ENCODE measurements at regions of chr21 and their contacts with region 1.

Region 1: DNA sequence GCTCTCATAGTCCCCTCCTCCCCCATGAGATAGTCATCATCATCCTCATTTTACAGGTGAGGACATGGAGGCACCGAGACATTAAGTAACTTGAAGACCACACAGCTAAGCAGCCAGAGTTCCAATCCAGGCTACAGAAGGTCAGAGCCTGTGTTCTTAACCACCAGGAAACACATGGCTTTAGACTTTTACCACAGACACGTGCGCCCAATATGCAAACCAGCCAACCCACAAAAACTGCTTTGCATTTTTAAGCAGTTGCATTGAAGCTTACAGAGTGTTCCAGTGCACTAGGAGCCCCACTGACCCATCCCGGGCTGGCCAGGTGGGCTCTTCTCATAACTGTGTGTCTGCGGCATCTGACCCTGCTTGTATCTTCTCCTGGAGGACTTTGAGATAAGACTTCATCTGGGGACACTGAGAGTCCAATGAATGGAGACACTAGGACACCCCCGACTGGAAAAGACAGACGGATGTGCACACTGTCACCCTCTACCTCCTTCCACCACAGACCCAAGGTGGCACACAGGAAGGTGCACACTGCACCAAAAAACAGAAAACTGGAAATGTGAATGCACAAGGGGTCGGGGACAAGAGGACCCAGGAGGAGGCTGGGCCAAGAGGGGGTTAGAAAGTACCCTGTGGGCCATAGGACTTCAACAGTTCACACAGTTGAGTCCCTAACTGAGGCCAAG is 56.4 kb downstream of the ETS2 start:
- DNase-seq: peak; percentile 77
- ATAC-seq: peak; percentile 84
- H3K4me3 ChIP-seq: peak overlapping the region in 2 of 5 experiments; percentile 26 to 29
- H3K4me3 Mint-ChIP-seq: peak overlapping the region; percentile 76
- H3K27ac ChIP-seq: no peak overlapping the region
- H3K27ac Mint-ChIP-seq: peak overlapping the region; percentile 66
- H3K4me1 ChIP-seq: peaks cover 26 to 36% of the 10 kb centered on the region in 2 donors
- H3K4me1 Mint-ChIP-seq: peaks cover 26% of the 10 kb centered on the region
- H3K27me3 ChIP-seq: peaks cover 0 to 47% (median 15%) of the 10 kb centered on the region in 4 experiments
- H3K27me3 Mint-ChIP-seq: peaks cover 70% of the 10 kb centered on the region
- CTCF ChIP-seq: no peak

Region 2: GRCh38 chr21:38831526-38832467 is 30.3 kb before region 1 on chr21:
- CTCF ChIA-PET with region 1: no interaction called
- POLR2A ChIA-PET with region 1: no interaction called
- intact Hi-C with region 1: loop called (anchors 1 kb)
- DNase-seq: peak; percentile 71
- ATAC-seq: peak; percentile 82
- H3K4me3 ChIP-seq: peak overlapping the region in 1 of 5 experiments; percentile 49
- H3K4me3 Mint-ChIP-seq: peak overlapping the region; percentile 47
- H3K27ac ChIP-seq: peak overlapping the region in 1 of 2 donors; percentile 28
- H3K27ac Mint-ChIP-seq: peak overlapping the region; percentile 51
- H3K4me1 ChIP-seq: peaks cover 15 to 19% of the 10 kb centered on the region in 2 donors
- H3K4me1 Mint-ChIP-seq: peaks cover 18% of the 10 kb centered on the region
- H3K27me3 ChIP-seq: peaks cover 0 to 8% (median 1%) of the 10 kb centered on the region in 4 experiments
- H3K27me3 Mint-ChIP-seq: peaks cover 22% of the 10 kb centered on the region
- CTCF ChIP-seq: no peak

Region 3: DNA sequence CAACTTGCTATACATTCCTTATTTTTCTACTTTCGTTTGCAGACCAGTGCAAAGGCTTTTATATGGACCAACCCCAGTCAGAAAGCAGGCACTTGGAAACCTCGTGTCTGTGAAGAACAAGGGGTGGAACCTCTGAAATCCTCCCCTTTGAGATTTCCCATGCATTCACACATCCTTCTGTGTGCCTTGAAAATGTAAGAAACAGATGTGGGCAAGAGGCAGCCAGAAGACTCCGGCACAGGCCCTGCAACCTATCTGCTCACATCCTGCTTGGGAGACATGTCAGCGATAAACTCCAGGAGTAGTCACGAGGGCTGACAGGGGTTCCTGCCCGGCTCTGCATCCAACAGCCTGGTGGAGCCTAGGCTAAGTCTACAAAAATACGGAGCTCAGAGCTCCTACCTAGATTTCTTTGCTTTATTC is 13.9 kb before region 1 on chr21:
- CTCF ChIA-PET with region 1: no interaction called
- POLR2A ChIA-PET with region 1: no interaction called
- intact Hi-C with region 1: no loop called
- DNase-seq: no peak
- ATAC-seq: no peak
- H3K4me3 ChIP-seq: no peak overlapping the region
- H3K4me3 Mint-ChIP-seq: no peak overlapping the region
- H3K27ac ChIP-seq: no peak overlapping the region
- H3K27ac Mint-ChIP-seq: no peak overlapping the region
- H3K4me1 ChIP-seq: no peaks in the 10 kb centered on the region
- H3K4me1 Mint-ChIP-seq: peaks cover 4% of the 10 kb centered on the region
- H3K27me3 ChIP-seq: peaks cover 0 to 21% (median 4%) of the 10 kb centered on the region in 4 experiments
- H3K27me3 Mint-ChIP-seq: peaks cover 48% of the 10 kb centered on the region
- CTCF ChIP-seq: no peak

Region 4: DNA sequence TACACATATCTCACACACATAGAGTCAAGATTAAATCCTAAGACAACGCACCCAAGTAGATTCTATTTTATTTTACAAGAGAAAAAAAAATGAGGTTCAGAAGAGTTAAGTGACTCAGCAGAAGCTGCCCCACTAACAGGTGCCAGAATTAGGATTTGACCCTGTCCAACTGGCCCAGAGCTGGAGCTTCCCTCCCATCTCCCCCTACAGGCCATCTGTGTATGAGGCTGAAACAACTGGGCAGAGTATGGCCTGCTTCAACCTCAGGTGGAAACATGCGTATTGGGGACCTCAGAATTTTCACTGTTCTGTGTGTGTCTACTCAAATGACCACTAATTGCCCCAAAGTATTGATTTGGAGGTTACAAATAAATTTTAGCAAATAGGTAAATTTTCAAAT is 291.2 kb after region 1 on chr21:
- CTCF ChIA-PET with region 1: no interaction called
- POLR2A ChIA-PET with region 1: no interaction called
- intact Hi-C with region 1: no loop called
- DNase-seq: no peak
- ATAC-seq: no peak
- H3K4me3 ChIP-seq: no peak overlapping the region
- H3K4me3 Mint-ChIP-seq: no peak overlapping the region
- H3K27ac ChIP-seq: no peak overlapping the region
- H3K27ac Mint-ChIP-seq: no peak overlapping the region
- H3K4me1 ChIP-seq: no peaks in the 10 kb centered on the region
- H3K4me1 Mint-ChIP-seq: no peaks in the 10 kb centered on the region
- H3K27me3 ChIP-seq: peaks cover 0 to 3% (median 0%) of the 10 kb centered on the region in 4 experiments
- H3K27me3 Mint-ChIP-seq: peaks cover 8% of the 10 kb centered on the region
- CTCF ChIP-seq: peak; percentile 27